ENCODE measurements at regions of chr7 and their contacts with region 1.

Region 1: GRCh38 chr7:129948877-129949291 is 3.9 kb downstream of the UBE2H start:
- DNase-seq: peak; percentile 92 to 94
- ATAC-seq: peak; percentile 74 to 88
- H3K4me3 ChIP-seq: peak overlapping the region; percentile 73
- H3K27ac ChIP-seq: peak overlapping the region; percentile 83 to 95
- H3K4me1 ChIP-seq: peaks cover 32% of the 10 kb centered on the region
- CTCF ChIP-seq: no peak
- EP300 ChIP-seq: no peak
- POLR2A ChIP-seq: no peak
- RAD21 ChIP-seq: no peak; a peak in 2 of 5 replicates

Region 2: GRCh38 chr7:129906700-129907099 is 42.2 kb before region 1 on chr7:
- CTCF ChIA-PET with region 1: interaction called, 3 read pairs
- POLR2A ChIA-PET with region 1: interaction called, 12 read pairs
- DNase-seq: peak; percentile 38 to 88
- ATAC-seq: peak; percentile 93 to 95
- H3K4me3 ChIP-seq: no peak overlapping the region
- H3K27ac ChIP-seq: peak overlapping the region; percentile 79 to 82
- H3K4me1 ChIP-seq: peaks cover 75% of the 10 kb centered on the region
- CTCF ChIP-seq: no peak
- EP300 ChIP-seq: no peak
- POLR2A ChIP-seq: no peak
- RAD21 ChIP-seq: peak in 1 of 2 experiments; percentile 27; a peak in 2 of 5 replicates